ENCODE measurements at regions of chr7 and their contacts with region 1.

Region 1: DNA sequence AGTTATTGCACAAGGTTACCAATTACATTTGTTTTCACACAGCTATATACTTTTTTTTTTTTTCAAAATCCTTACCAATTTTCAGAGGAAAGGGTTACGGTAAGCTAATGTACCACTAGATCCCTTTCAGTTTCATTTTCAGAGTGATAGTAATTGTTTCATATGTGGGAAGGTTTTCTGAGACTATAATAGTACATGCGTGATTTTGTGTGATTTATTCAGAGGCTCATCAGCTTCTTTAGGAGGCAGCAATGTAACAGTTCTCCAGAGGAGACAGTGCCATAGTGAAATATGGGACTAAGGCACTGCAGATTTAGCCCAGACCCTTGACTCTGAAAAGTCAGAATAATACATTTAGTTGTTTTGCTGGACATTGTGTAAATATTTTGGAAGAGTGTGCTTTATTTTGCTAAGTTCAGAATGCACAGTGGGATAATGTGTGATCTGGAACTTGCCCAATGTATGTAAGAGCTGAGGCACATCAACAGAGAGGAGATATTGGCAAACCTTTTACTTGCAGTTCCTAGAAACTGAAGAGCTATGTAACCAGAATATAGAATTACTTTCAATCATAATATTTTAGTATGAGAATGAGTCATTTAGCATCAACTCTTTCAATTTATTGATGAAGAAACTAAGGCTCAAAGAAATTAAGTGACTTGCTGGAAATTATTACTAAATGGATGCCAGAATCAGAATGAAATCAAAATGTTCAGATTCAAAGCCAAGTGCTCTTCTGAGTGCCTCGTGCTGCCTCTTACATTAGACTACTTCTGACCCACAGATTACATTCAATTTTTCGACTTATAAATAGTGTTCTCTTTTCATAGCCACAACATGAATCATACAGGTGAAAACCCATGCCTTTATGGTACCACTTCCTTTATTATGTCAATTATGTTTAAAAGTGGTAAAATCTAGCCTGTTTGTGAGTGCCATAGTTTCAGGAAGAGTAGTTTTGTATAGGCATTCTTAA is 207.7 kb upstream of the TEX47 start:
- DNase-seq: no peak
- H3K4me3 Mint-ChIP-seq: peak overlapping the region; percentile 77
- H3K27ac Mint-ChIP-seq: peak overlapping the region; percentile 84
- H3K4me1 Mint-ChIP-seq: peaks cover 17% of the 10 kb centered on the region
- H3K27me3 Mint-ChIP-seq: peaks cover 6% of the 10 kb centered on the region

Region 2: DNA sequence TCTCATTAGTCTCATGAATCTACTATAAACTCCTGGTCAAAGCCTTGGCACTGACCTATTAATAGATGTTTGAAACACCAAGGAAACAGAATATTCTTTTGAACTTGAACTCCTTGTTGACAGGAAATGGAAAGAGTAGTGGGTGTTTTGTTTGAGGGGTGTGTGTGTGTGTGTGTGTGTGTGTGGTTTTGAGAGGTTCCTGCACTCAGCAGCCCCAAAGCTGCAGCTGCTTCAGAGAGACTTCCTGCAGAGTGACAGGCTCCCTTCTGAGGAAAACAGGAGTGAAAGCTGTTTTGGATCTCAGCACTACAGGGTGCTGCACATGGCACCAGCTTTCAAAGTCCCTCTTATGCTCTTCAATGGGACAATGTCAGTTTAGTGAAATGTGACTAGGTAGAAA is 604.5 kb after region 1 on chr7:
- intact Hi-C with region 1: loop called (anchors 5 kb)
- DNase-seq: peak; percentile 35
- H3K4me3 Mint-ChIP-seq: peak overlapping the region; percentile 70
- H3K27ac Mint-ChIP-seq: peak overlapping the region; percentile 98
- H3K4me1 Mint-ChIP-seq: peaks cover 47% of the 10 kb centered on the region
- H3K27me3 Mint-ChIP-seq: peaks cover 3% of the 10 kb centered on the region